ENCODE measurements at regions of chr11 and their contacts with region 1.

Region 1: DNA sequence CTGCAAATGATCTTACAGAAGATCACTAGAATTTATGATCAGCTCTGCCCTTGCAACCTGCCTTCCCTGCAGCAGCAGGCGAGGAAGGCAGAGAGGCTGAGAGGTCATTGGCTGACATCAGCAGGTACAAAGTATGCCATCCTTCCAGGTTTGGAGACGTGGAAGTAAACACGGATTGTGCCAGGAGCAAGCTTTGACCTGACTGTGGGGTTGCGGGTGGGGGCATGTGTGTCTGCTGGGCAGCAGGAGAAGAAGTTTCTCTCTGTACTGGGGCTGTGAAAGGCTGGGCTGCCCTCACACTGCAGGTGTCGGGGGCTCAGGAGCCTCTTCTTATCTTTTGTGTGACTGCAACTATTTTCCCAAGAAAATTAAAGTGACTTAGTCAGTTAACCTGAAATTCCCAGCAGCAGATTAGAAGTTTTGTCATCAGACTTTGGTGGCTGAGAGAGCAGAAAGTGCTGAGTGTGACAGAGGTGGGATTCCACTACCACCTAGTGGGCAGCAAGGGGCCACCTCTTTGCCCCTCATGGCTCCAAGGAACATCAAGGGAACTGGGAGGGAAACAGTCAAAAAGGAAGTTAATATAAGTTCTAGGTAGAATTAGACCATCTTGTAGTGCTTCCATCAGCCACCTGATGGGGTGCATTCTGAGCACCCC is 565.9 kb downstream of the ETS1 start:
- DNase-seq: no peak
- ATAC-seq: no peak
- H3K4me3 ChIP-seq: no peak overlapping the region
- H3K27ac ChIP-seq: no peak overlapping the region
- H3K4me1 ChIP-seq: peaks cover 0 to 1% (median 0%) of the 10 kb centered on the region in 12 donors
- H3K27me3 ChIP-seq: no peaks in the 10 kb centered on the region
- CTCF ChIP-seq: peak in 8 of 12 donors; percentile 18 to 40 (median 30)
- POLR2A ChIP-seq: no peak

Region 2: DNA sequence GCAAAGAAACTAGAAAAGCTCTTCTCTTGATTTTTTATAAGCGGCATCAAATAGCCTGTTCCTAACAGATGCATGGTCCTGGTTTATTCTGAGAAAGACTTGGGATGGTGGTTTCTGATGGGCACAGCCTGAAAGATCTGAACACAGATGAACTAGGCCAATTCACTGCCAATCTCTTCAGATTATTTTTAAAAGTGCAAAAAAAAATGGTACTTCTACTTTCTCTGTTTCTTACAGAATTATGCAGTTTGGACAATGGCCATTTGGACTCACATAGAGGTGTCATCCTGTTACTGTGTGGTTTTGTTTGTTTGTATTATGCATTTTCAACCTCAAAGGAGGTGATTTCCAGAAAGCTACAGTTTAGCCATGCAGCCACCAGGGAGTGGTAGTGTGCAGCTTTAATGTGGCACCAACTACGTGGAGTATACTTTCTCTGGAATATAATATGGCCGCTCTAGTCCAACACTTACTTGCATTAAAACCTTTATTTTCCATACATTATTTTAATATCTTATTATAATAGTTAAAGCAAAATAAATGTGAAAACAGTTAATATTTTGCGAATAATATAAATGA is 551.1 kb before region 1 on chr11:
- intact Hi-C with region 1: loop called in 1 of 10 experiments (anchors 5 kb)
- DNase-seq: no peak
- ATAC-seq: no peak
- H3K4me3 ChIP-seq: no peak overlapping the region
- H3K27ac ChIP-seq: no peak overlapping the region
- H3K4me1 ChIP-seq: no peaks in the 10 kb centered on the region
- H3K27me3 ChIP-seq: no peaks in the 10 kb centered on the region
- CTCF ChIP-seq: peak in 11 of 12 donors; percentile 7 to 46 (median 30)
- POLR2A ChIP-seq: no peak

Region 3: GRCh38 chr11:127843483-127844396 is 177.7 kb before region 1 on chr11:
- intact Hi-C with region 1: loop called in 2 of 10 experiments (anchors 5 kb)
- DNase-seq: peak; percentile 42 to 76 (median 60)
- ATAC-seq: no peak
- H3K4me3 ChIP-seq: no peak overlapping the region
- H3K27ac ChIP-seq: no peak overlapping the region
- H3K4me1 ChIP-seq: no peaks in the 10 kb centered on the region
- H3K27me3 ChIP-seq: peaks cover 0 to 6% (median 0%) of the 10 kb centered on the region in 9 donors
- CTCF ChIP-seq: peak; percentile 42 to 78 (median 62)
- POLR2A ChIP-seq: no peak

Region 4: GRCh38 chr11:127902382-127902781 is 119.1 kb before region 1 on chr11:
- intact Hi-C with region 1: no loop called
- DNase-seq: no peak
- ATAC-seq: no peak
- H3K4me3 ChIP-seq: no peak overlapping the region
- H3K27ac ChIP-seq: no peak overlapping the region
- H3K4me1 ChIP-seq: no peaks in the 10 kb centered on the region
- H3K27me3 ChIP-seq: no peaks in the 10 kb centered on the region
- CTCF ChIP-seq: no peak
- POLR2A ChIP-seq: no peak